ENCODE measurements at regions of chr14 and their contacts with region 1.

Region 1: DNA sequence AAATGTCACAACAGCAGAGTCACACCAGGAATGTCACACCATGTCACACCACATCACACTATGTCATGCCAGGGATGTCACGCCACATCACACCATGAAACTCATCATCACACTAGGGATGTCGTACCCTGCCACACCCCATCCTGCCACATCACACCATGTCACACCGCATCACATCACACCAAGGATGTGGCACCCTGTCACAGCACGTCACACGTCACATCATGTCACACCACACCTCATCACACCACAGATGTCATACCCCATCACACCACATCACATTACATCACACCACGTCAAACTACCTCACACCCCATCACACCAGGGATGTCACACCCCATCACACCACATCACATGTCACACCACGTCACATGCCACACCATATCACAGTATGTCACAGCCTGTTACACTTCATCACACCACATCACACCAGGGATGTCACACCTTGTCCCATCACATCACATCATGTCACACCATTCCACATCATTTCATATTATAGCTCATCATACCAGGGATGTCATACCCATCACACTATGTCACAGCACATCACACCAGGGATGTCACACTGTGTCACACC is 90.9 kb downstream of the TMEM121 start:
- DNase-seq: no peak
- ATAC-seq: no peak
- H3K4me3 ChIP-seq: no peak overlapping the region
- H3K4me1 ChIP-seq: no peaks in the 10 kb centered on the region
- CTCF ChIP-seq: no peak

Region 2: DNA sequence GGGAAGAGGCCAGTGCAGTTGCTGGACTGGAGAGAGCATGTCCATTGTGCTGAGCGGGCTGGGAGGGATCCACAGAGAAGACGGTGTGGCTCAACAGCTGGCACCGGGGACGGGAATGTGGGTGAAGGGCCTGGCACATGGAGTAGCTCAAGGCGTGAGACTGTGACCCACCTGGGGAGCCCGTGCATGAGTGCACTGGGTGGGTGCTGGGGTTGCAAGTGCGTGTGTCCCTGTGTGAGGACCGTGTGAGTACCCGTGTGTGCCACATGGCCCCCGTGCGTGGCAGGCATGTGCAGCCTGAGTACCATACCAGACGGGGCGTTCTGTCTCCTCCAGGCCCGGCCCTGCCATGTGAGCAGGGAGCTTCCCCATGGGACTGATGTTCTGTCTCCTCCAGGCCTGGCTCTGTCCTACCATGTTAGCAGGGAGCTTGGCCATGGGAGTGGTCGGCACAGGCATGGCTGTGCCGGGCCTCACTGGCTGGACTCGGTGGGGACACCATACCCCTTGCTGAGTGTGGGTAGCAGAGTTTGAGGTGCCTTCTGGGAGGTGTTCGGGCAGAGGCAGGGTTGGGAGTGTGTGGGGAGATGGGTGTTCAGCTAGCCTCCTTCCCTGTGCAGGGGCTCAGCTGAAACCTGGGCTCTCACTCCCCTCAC is 143.5 kb after region 1 on chr14:
- intact Hi-C with region 1: loop called in 1 of 2 experiments (anchors 5 kb)
- DNase-seq: peak in 1 of 3 donors; percentile 29
- ATAC-seq: no peak
- H3K4me3 ChIP-seq: no peak overlapping the region
- H3K4me1 ChIP-seq: no peaks in the 10 kb centered on the region
- CTCF ChIP-seq: no peak

Region 3: DNA sequence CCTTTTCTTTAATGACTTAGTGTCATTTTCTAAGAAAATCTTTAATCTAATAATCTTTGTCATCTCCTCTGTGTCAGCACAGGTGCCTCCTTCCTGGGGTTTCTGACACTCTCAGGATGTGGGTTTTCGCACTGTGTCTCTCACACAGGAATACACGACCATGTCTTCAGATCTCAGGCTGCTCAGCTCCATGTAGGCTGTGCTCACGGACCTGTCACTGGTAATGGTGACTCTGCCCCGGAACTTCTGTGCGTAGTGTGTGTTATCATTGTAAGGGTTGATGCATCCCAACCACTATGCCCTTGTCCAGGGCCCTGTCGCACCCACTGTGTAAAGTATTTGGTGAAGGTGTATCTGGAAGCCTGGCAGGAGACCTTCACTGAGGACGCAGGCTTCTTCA is 556.9 kb after region 1 on chr14:
- intact Hi-C with region 1: no loop called
- DNase-seq: peak in 2 of 3 donors; percentile 25 to 42
- ATAC-seq: peak; percentile 52
- H3K4me3 ChIP-seq: no peak overlapping the region
- H3K4me1 ChIP-seq: no peaks in the 10 kb centered on the region
- CTCF ChIP-seq: no peak

Measured in mucosa of descending colon (tissue), 3 donors.